A549 (cell line): ENCODE measurements at regions of chr9 and their contacts with region 1.

Region 1: DNA sequence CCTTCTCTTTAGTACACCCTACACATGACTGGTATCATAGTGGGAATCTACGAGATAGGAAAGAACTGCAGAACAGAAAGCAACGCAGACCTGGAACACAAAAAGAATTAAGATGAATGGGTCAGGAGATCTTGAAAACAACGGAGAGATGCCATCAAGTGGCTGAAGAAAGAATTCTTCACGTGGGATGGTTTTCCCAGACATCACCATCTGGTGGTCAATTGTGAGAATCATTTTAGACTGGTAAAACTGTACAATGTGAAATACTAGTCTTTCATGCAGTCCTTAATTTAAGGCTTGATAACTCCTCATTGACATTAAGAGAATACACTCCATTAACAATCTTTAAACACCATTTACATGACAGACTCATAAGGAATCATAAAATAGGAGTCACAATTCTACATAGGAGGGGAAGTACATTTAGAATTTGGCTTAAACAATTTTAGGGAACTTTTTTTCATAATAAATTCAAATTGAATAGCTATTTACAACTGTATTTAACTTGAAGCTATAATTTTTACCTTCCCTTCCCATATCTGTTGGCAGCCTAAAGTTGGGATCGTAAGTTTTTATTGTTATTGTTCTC is 128.4 kb upstream of the TRPM3 start:
- DNase-seq: peak; percentile 55 to 73
- ATAC-seq: peak; percentile 90
- H3K4me3 ChIP-seq: no peak overlapping the region
- H3K27ac ChIP-seq: no peak overlapping the region
- H3K4me1 ChIP-seq: no peaks in the 10 kb centered on the region
- CTCF ChIP-seq: peak; percentile 96
- EP300 ChIP-seq: no peak
- POLR2A ChIP-seq: no peak
- RAD21 ChIP-seq: peak; percentile 67

Region 2: DNA sequence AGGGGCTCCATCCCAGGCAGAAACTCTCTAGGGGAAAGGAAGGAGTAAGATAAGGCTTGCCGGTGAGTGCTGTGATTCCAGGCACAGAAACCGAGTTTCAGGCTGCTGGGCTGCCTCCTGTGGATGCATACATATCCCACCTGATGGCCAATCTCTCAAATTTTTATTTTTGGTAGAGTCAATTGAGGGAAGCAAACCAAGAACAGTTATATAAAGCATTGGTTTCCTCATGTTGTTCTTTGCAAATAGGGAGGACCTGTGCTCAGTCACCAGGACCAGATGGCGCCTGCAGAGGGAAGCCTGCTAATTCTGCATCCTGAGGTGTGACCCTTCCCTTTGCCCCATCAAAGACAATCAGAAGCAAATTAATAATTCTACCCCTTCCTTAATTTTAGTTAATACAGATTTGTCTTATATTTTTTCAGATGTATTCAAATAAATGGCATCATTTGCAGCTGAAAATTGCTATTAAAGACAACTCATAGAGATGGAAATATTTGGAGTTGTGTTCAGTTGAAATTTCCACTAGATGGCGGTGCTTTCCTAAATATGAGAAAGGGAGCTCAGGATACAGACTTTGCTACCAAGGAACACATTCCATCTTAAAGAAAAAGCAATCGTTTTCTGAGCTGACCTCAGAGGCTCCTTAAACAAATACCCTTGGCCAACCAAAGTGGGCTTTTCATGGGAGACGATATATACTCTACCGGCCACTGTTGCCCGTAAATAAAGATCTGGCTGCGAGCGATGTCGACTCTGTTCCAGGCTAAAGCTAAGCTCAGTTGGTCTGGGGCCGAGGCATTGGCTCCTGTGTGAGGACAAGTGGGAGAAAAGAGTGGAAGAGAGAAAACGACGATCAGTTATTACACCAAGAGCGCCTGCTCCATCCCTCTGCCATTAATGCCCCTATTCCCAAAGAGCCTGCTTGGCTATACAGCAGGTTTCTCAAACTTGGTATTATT is 609.7 kb before region 1 on chr9:
- CTCF ChIA-PET with region 1: interaction called, 114 read pairs
- POLR2A ChIA-PET with region 1: no interaction called
- DNase-seq: peak; percentile 8 to 50
- ATAC-seq: peak; percentile 82 to 92
- H3K4me3 ChIP-seq: 0 out of 3 replicates have a peak overlapping the region, but pooled peaks have one; percentile 25
- H3K27ac ChIP-seq: no peak overlapping the region
- H3K4me1 ChIP-seq: no peaks in the 10 kb centered on the region
- CTCF ChIP-seq: peak; percentile 84
- EP300 ChIP-seq: no peak
- POLR2A ChIP-seq: no peak
- RAD21 ChIP-seq: peak; percentile 83 to 86

Region 3: DNA sequence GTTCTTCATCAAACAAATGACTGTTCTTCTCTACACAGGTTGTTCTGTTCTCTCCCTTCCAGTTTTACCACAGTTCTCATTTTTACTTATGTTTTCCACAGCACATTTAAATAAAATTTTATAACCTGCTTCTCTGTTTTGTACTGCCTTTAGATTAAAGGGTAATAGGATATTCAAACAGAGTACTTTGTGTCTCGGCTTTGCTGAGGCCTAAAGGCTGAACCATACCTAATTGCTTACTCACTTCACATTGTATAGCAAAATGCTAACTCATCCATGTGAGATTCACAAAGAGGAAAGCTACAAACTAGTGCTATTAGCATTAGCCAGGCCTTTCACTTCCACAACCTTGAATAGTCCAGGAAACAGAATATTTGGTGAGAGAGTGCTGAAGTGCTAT is 328.7 kb before region 1 on chr9:
- CTCF ChIA-PET with region 1: interaction called, 25 read pairs
- POLR2A ChIA-PET with region 1: no interaction called
- DNase-seq: no peak
- ATAC-seq: no peak
- H3K4me3 ChIP-seq: no peak overlapping the region
- H3K27ac ChIP-seq: no peak overlapping the region
- H3K4me1 ChIP-seq: no peaks in the 10 kb centered on the region
- CTCF ChIP-seq: no peak
- EP300 ChIP-seq: no peak
- POLR2A ChIP-seq: no peak
- RAD21 ChIP-seq: no peak

Region 4: GRCh38 chr9:71094708-71095251 is 155.0 kb before region 1 on chr9:
- CTCF ChIA-PET with region 1: no interaction called
- POLR2A ChIA-PET with region 1: no interaction called
- DNase-seq: no peak
- ATAC-seq: no peak
- H3K4me3 ChIP-seq: no peak overlapping the region
- H3K27ac ChIP-seq: no peak overlapping the region
- H3K4me1 ChIP-seq: no peaks in the 10 kb centered on the region
- CTCF ChIP-seq: no peak
- EP300 ChIP-seq: no peak
- POLR2A ChIP-seq: no peak
- RAD21 ChIP-seq: no peak

Region 5: DNA sequence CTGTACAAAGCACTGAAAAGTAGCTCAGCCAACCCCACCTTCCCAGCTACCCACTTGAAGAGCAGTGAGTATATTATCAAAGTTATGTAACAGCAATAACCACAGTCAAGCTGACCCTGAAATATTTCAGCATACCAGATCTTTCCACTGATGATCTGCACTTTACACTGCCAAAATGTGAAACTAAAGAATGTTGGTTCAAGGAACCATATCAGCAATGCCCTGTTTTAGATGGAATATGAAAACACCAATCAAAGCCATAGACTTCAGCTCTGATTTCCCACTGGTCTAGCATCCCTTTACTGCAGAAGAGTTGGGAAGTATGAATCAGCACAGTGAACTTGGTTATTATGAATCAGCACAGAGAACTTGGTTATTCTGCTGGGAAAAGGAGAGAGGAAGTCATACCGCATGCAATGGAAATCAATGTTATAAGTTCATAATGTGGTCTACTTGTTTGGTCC is 498.5 kb after region 1 on chr9:
- CTCF ChIA-PET with region 1: no interaction called
- POLR2A ChIA-PET with region 1: no interaction called
- DNase-seq: no peak
- ATAC-seq: peak; percentile 69 to 81
- H3K4me3 ChIP-seq: no peak overlapping the region
- H3K27ac ChIP-seq: peak overlapping the region; percentile 27 to 71; a peak in 4 of 6 replicates
- H3K4me1 ChIP-seq: peaks cover 93% of the 10 kb centered on the region
- CTCF ChIP-seq: no peak
- EP300 ChIP-seq: no peak
- POLR2A ChIP-seq: no peak
- RAD21 ChIP-seq: no peak